IMR-90 (cell line): ENCODE measurements at regions of chr4 and their contacts with region 1.

Region 1: DNA sequence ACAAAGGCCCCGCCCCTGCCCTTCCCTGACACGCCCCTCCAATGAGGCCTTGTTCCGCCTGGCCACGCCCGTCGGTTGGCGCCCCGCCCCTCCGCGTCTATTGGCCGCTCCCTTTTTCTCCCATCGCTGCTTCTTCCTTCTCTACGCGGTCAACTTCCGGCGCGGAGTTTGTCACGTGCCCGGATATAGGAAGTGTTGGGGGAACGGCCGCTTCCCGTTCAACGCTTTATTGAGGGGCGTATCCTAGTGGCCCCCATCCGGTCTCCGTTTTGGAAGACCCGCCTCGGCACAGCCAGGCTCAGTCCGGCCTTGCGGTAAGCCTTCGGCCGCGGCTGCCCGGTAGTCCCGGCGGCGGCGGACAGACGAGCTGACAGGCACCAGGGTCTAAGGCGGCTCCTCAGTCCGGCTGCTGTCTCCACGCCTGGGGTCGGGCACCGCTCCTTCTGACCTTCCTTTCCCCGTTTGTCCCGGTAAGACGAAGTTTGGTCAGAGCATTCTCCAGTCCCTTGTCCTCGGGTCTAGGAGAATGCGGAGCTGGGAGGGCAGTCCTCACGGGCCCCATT is at the start of gene EXOC1:
- DNase-seq: peak; percentile 94
- ATAC-seq: peak; percentile 100
- H3K4me3 ChIP-seq: peak within 1 kb of the TSS; percentile 89
- H3K27ac ChIP-seq: peak within 1 kb of the TSS; percentile 78
- H3K4me1 ChIP-seq: no peaks in the 10 kb centered on the region
- H3K27me3 ChIP-seq: 0 out of 2 replicates have a peak, but pooled peaks cover 2% of the 10 kb centered on the region
- CTCF ChIP-seq: no peak
- POLR2A ChIP-seq: peak; percentile 76; the same call in 1 of the 2 replicates
- RAD21 ChIP-seq: no peak
- total RNA-seq, gene EXOC1: 47.5 and 49.5 TPM in 2 replicates

Region 2: GRCh38 chr4:55409468-55410171 is 443.9 kb before region 1 on chr4:
- CTCF ChIA-PET with region 1: no interaction called
- POLR2A ChIA-PET with region 1: no interaction called
- dilution Hi-C with region 1: no loop called
- in situ Hi-C with region 1: loop called (anchors 25 kb)
- intact Hi-C with region 1: no loop called
- DNase-seq: peak; percentile 13
- ATAC-seq: peak; percentile 40; the same call in 1 of the 2 replicates
- H3K4me3 ChIP-seq: no peak overlapping the region
- H3K27ac ChIP-seq: peak overlapping the region; percentile 9; the same call in 1 of the 2 replicates
- H3K4me1 ChIP-seq: peaks cover 8% of the 10 kb centered on the region
- H3K27me3 ChIP-seq: no peaks in the 10 kb centered on the region
- CTCF ChIP-seq: peak; percentile 33; the same call in 1 of the 2 replicates
- POLR2A ChIP-seq: no peak
- RAD21 ChIP-seq: peak; percentile 43; the same call in 1 of the 2 replicates

Region 3: DNA sequence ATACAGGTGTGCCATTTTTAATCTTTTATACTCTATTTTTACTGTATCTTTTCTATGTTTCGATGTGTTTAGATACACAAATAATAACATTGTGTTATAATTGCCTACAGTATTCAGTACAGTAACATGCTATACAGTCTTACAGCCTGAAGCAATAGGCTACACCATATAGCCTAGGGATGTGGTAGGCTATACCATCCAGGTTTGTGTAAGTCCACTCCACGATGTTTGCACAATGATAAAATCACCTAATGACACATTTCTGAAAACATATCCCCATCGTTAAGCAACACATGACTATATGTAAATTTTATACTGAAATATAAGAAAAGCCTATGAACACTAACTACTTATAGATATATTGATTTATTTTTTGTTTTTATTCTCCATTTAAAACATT is 82.9 kb before region 1 on chr4:
- CTCF ChIA-PET with region 1: no interaction called
- POLR2A ChIA-PET with region 1: no interaction called
- dilution Hi-C with region 1: no loop called
- in situ Hi-C with region 1: no loop called
- intact Hi-C with region 1: no loop called
- DNase-seq: no peak
- ATAC-seq: no peak
- H3K4me3 ChIP-seq: no peak overlapping the region
- H3K27ac ChIP-seq: no peak overlapping the region
- H3K4me1 ChIP-seq: no peaks in the 10 kb centered on the region
- H3K27me3 ChIP-seq: no peaks in the 10 kb centered on the region
- CTCF ChIP-seq: no peak
- POLR2A ChIP-seq: no peak
- RAD21 ChIP-seq: no peak

Region 4: GRCh38 chr4:56099378-56099786 is 245.8 kb after region 1 on chr4:
- CTCF ChIA-PET with region 1: no interaction called
- POLR2A ChIA-PET with region 1: no interaction called
- dilution Hi-C with region 1: no loop called
- in situ Hi-C with region 1: no loop called
- intact Hi-C with region 1: no loop called
- DNase-seq: no peak
- ATAC-seq: no peak
- H3K4me3 ChIP-seq: no peak overlapping the region
- H3K27ac ChIP-seq: no peak overlapping the region
- H3K4me1 ChIP-seq: no peaks in the 10 kb centered on the region
- H3K27me3 ChIP-seq: no peaks in the 10 kb centered on the region
- CTCF ChIP-seq: no peak
- POLR2A ChIP-seq: no peak
- RAD21 ChIP-seq: no peak